Vagina (tissue), 2 donors: ENCODE measurements at regions of chr7 and their contacts with region 1.

Region 1: DNA sequence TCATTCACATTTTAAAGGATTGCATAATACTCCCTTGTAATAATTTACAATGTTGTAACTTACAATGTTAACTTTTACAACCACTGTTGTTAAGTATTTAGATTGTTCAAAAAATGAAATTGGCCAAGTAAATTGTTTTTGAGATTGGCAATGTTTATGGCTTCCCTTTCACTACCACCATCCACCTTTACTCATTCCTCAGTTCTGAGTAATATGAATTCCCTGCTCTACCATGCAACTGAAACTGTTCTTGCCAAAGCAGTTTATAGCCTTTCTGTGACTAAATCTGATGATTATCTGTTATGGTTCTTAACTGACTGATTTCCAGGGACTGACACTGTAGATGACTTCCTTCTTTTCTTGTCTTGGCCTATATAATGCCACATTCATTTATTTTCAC is 80.5 kb upstream of the TMEM106B start:
- DNase-seq: no peak
- H3K4me3 ChIP-seq: no peak overlapping the region
- H3K27ac ChIP-seq: no peak overlapping the region
- H3K4me1 ChIP-seq: no peaks in the 10 kb centered on the region
- H3K27me3 ChIP-seq: no peaks in the 10 kb centered on the region
- CTCF ChIP-seq: no peak
- POLR2A ChIP-seq: no peak

Region 2: GRCh38 chr7:12174931-12175330 is 44.3 kb after region 1 on chr7:
- intact Hi-C with region 1: loop called (anchors 1 kb)
- DNase-seq: no peak
- H3K4me3 ChIP-seq: no peak overlapping the region
- H3K27ac ChIP-seq: no peak overlapping the region
- H3K4me1 ChIP-seq: no peaks in the 10 kb centered on the region
- H3K27me3 ChIP-seq: no peaks in the 10 kb centered on the region
- CTCF ChIP-seq: no peak
- POLR2A ChIP-seq: no peak

Region 3: DNA sequence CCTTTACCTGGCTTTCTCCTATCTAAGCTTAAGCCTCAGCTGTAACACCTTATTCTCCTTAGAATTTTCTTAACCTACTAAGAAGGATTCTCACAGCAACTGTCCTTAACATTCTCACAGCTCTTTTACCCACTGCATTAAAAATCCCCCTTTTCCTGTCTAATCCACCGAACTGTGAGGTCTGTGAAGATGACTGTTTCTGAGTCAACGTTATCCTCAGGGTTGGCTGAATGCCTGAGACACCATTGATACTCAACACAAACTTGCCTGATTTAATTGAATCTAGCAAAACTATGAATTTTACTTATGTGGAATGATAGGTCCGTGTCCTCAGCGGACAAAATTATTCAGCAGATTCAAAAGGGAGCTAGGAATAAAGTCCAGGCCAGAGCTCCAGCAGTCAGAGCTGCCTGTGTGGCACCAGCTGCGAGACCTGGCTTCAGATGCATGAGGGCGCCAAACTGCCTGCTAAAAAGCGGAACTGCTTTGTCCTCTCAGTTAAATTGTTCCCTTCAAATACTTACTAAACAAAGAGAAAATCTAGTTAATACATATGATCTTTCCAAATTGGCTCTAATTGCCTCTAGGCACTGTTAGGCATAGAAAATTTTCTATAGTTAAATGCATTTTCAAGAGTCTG is 306.4 kb after region 1 on chr7:
- intact Hi-C with region 1: no loop called
- DNase-seq: no peak
- H3K4me3 ChIP-seq: no peak overlapping the region
- H3K27ac ChIP-seq: no peak overlapping the region
- H3K4me1 ChIP-seq: no peaks in the 10 kb centered on the region
- H3K27me3 ChIP-seq: no peaks in the 10 kb centered on the region
- CTCF ChIP-seq: no peak
- POLR2A ChIP-seq: no peak